ENCODE measurements at regions of chr15 and their contacts with region 1.

Region 1: GRCh38 chr15:62165104-62165792 is at the start of gene C2CD4B:
- DNase-seq: peak; percentile 87
- total RNA-seq, gene C2CD4B: 1.7 TPM

Region 2: DNA sequence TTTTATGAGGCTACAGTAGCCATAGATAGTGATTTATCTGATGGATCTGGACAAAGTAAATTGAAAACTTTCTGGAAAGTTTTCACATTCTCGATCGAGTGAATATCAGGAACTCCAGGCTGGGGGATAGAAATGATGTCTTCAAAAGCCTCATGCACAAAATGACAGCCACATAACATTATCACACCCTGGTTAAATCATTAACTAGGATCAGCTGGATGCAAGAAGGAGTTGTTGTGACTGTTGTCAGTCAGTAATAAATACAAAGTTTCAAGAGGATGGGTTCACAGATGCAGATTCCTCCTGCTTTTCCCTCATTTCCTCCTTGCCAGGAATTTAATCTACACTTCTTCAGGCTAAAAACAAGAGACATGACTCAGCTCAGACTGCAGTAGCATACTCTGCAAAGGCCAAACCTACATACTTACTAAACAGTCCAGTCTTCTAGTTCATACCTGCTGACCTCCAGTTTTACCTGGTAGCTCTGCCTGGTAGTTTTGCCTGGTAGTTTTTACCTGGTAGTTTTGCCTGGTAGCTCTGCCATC is 57.6 kb before region 1 on chr15:
- intact Hi-C with region 1: no loop called
- DNase-seq: no peak

Region 3: GRCh38 chr15:62119227-62119864 is 45.9 kb before region 1 on chr15:
- intact Hi-C with region 1: loop called (anchors 2 kb)
- DNase-seq: no peak

Region 4: DNA sequence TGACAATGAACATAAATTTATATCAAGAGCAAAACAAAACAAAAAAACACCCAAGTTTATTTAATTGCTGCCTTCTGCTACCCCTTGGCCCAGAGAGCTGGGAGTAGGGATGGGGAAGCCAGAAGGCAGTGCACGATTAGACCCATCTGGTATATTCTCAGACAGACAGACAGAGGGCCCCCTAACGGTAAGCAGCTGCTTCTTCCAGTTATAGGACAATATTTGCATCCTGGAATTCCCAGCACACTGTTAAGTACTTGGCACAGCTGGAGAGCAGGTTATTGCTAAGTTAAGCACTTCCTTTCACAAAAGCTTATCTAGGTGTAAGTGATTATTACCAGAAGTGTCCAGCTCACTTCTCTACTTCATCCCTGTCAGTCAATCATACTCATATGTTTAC is 39.5 kb before region 1 on chr15:
- intact Hi-C with region 1: loop called (anchors 2 kb)
- DNase-seq: no peak